Activated CD8-positive, alpha-beta memory T cell treated with anti-CD3 and anti-CD28 coated beads, Interleukin-2, amount 10 ng/mL, durations not matched to agents 7 days and 5 days (primary cell): ENCODE measurements at regions of chr3 and their contacts with region 1.

Region 1: GRCh38 chr3:111989061-111989678 is 9.6 kb upstream of the TAGLN3 start:
- DNase-seq: no peak
- ATAC-seq: peak; percentile 80
- H3K4me3 Mint-ChIP-seq: no peak overlapping the region
- H3K27ac Mint-ChIP-seq: no peak overlapping the region
- H3K4me1 Mint-ChIP-seq: peaks cover 33% of the 10 kb centered on the region
- H3K27me3 Mint-ChIP-seq: no peaks in the 10 kb centered on the region

Region 2: GRCh38 chr3:111978493-111979433 is 10.4 kb before region 1 on chr3 and contains the start of gene ABHD10:
- CTCF ChIA-PET with region 1: interaction called, 16 read pairs
- DNase-seq: peak; percentile 99
- ATAC-seq: peak; percentile 96
- H3K4me3 Mint-ChIP-seq: peak within 1 kb of the TSS; percentile 92
- H3K27ac Mint-ChIP-seq: peak within 1 kb of the TSS; percentile 94
- H3K4me1 Mint-ChIP-seq: peaks cover 39% of the 10 kb centered on the region
- H3K27me3 Mint-ChIP-seq: no peaks in the 10 kb centered on the region
- total RNA-seq, gene ABHD10: 45.2 to 50.7 TPM

Region 3: DNA sequence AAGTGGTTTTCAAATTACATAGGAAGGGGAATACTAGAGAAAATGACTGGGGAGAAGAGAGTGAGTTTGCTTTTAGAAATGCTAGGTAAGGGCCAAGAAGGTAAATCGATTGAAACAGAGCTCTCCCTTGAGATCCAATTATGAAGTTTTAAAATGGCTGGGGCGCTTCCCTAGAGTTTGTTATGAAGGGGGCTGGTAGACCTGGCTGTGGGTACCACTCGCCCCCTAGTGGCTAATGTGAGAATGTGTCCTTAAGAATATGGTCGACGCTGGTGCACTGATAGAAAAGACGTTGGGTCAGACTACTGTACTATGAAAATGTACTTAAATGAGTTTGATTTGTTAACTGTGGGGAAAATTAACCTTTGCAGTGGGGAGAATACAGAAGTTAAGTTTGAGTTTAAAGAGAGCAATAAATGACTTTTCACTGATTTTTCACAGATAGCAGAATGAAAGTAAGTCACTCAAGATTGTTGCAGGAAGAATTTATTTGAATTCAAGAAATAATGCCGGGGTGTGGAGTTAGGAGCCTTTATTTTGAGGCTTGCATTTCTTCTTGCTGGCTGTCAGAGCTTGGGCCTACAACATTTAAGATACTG is 54.5 kb after region 1 on chr3:
- CTCF ChIA-PET with region 1: interaction called, 11 read pairs
- DNase-seq: peak; percentile 66
- ATAC-seq: peak; percentile 96
- H3K4me3 Mint-ChIP-seq: no peak overlapping the region
- H3K27ac Mint-ChIP-seq: no peak overlapping the region
- H3K4me1 Mint-ChIP-seq: peaks cover 5% of the 10 kb centered on the region
- H3K27me3 Mint-ChIP-seq: no peaks in the 10 kb centered on the region

Region 4: DNA sequence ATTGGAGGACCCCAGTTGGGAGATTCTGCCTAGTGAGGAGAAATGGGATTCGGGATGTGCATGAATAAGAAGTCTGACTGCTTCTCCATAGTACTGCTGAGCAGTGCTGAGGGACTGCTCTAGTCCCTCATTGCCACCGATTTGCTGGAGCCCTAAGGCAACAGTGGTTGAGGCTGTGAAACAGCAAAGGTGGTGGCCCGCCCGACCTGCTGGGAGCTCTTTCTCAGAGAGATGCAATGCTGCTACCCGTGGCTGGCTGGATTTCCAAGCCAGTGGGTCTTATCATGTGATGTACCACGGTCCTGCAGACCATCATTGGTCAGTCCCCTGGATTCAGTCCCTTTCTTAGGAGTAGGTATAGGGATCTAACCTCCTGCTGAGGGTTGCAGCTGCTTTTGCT is 186.5 kb after region 1 on chr3:
- CTCF ChIA-PET with region 1: no interaction called
- DNase-seq: no peak
- ATAC-seq: no peak
- H3K4me3 Mint-ChIP-seq: no peak overlapping the region
- H3K27ac Mint-ChIP-seq: no peak overlapping the region
- H3K4me1 Mint-ChIP-seq: no peaks in the 10 kb centered on the region
- H3K27me3 Mint-ChIP-seq: peaks cover 5% of the 10 kb centered on the region